MCF 10A (cell line): ENCODE measurements at regions of chr14 and their contacts with region 1.

Region 1: DNA sequence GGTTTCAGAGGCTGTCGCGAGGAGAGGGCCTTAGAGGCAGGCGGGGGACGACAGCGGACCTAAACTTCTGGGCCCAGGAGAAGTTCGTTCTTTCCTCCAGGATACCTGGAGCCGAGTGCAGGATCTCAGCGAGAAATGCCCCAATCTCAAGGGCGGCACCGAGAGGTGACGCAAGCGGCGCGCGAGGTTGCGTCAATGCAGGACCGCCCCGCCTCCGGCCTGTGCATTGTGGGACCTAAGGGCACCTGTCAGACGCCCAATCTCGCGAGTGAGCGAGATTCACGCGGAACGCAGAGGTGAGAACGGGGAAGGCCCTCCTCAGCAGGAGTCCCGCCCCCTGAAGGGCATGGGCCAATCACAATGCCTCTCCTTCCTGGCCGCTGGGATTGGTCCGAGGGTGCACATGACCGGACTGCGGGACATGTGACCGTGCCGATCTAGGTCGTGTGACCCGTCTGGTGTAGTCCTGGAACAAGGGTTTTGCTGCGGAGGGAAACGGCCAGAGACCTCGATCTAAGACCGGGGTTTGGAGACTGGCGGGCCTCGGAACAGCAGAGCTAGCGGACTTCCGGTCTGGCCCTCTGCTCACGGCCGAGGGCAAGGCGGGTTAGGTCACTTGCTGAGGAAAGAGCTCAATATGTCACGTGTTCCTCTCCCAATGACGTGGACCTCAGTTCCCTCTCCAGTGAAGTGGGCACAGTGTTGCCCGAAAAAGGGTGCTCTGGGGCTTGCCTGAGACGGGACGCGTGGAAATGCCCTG is 16.3 kb upstream of the DYNC1H1 start:
- DNase-seq: peak; percentile 100
- H3K4me3 Mint-ChIP-seq: peak overlapping the region; percentile 94
- H3K27ac Mint-ChIP-seq: peak overlapping the region; percentile 100
- H3K4me1 Mint-ChIP-seq: peaks cover 9% of the 10 kb centered on the region
- H3K27me3 Mint-ChIP-seq: peaks cover 2% of the 10 kb centered on the region
- CTCF ChIP-seq: no peak

Region 2: DNA sequence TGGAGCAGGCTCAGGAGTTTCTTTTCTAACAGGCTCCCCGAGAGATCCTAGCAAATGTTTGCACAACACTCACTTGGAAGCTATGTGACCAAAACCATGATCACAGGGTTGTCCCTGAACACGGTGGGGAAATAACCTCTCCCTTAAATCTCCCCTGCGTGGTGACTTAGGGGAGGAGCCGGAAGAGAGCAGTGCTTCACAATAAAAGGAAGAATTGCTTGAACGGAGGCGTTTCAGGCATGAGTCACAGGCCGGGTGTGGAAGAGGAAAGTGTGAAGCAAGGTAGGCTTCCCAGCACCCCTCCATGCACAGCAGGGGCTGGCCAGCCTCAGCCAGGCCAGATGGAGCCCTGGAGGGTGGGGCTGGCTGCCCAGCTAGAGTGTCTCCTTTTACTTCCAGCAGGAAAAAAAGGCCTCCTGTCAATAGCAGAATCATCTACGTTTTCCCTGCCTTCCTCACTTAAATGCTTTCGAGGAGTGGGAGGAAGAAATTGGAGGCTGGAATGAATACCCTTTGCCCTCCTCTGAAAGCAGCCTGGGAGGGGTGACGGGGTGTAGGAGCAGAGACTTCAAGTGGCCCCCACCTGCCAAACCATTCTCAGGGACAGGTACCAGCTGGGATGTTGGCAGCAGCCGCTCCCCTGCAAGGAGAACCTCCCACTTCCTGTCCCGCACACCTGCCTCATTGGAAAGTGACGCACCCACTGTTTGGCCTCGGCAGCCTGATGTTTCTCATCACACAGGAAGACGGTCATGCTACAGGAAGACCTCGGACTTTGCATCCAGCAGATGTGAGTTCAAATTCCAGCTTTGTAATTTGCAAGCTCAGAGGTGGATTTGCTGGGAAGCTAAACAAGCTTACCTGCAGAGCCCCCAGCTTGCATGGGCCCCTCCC is 216.7 kb before region 1 on chr14:
- CTCF ChIA-PET with region 1: no interaction called
- POLR2A ChIA-PET with region 1: interaction called, 14 read pairs
- intact Hi-C with region 1: loop called (anchors 1 kb)
- DNase-seq: peak; percentile 98
- H3K4me3 Mint-ChIP-seq: peak overlapping the region; percentile 71
- H3K27ac Mint-ChIP-seq: peak overlapping the region; percentile 96
- H3K4me1 Mint-ChIP-seq: peaks cover 14% of the 10 kb centered on the region
- H3K27me3 Mint-ChIP-seq: no peaks in the 10 kb centered on the region
- CTCF ChIP-seq: no peak

Region 3: DNA sequence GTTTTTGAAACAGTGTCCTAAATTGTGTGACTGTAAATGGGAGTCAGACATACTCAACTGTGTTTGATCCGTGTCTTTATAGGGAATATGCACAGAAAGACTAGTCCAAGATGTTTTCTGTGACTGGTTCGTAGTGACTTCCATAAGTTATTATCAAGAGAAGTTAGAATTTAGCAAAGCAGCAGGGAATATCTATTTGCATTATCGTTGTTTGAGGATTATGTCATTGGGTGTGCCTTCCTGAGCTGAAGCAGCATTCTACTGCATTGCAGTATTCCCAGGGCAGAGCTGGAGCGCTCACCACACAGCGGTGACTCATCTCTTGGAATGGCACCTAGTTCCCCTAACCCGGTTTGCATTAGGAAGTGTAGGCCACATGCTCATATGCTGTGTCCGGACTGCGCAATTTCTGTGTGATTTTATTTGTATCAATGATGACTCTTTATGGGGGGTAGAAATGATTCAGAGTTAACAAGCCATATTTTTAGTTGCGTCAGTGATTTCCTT is 24.2 kb after region 1 on chr14:
- CTCF ChIA-PET with region 1: interaction called, 3 read pairs
- POLR2A ChIA-PET with region 1: interaction called, 29 read pairs
- intact Hi-C with region 1: no loop called
- DNase-seq: peak; percentile 99
- H3K4me3 Mint-ChIP-seq: peak overlapping the region; percentile 62
- H3K27ac Mint-ChIP-seq: peak overlapping the region; percentile 94
- H3K4me1 Mint-ChIP-seq: peaks cover 39% of the 10 kb centered on the region
- H3K27me3 Mint-ChIP-seq: no peaks in the 10 kb centered on the region
- CTCF ChIP-seq: no peak